ENCODE measurements at regions of chr6 and their contacts with region 1.

Region 1: DNA sequence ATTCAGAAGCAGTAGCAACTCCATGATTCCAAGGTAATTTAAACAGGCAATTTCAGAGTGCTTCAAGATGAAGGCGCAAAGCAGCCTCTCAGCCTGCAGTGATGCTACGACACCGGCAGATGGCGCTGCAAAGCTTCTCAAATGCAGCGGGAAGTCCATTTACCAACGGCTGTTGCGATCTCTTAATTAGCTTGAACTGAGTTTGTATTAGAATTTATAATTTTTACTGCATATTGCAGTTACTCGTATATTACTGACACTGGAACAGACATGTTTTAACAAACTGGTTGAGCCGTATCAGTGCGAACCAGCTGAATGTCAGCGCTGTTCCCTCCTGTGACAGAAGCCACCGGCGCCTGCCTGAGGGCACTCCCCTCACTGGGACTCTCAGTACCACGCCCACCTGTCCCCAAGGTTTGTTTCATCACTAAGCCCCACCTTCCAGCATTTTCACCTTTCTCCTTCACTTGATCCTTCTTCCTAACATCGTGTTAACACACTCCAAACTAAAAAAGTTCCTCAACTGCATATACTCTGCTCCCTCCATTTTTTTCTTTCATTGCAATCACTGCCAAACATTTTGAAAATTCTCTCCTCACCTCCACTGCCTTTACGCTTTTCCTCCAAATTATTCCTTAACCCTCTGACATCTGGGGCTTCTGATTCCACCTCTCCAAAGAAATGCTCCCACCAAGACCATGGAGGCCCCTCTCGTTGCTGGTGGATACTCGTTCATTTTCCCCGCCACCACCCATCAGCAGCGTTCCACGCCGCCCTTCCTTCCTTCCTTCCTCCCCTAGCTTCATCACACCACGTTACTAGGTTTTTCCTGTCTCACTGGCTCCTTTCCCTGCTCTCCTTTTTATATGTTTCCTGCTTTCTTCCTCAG is 14.5 kb downstream of the GNL1 start:
- DNase-seq: peak; percentile 89
- ATAC-seq: peak; percentile 89
- H3K4me3 Mint-ChIP-seq: peak overlapping the region; percentile 76
- H3K27ac Mint-ChIP-seq: peak overlapping the region; percentile 87
- H3K4me1 Mint-ChIP-seq: peaks cover 32% of the 10 kb centered on the region
- H3K27me3 Mint-ChIP-seq: no peaks in the 10 kb centered on the region

Region 2: DNA sequence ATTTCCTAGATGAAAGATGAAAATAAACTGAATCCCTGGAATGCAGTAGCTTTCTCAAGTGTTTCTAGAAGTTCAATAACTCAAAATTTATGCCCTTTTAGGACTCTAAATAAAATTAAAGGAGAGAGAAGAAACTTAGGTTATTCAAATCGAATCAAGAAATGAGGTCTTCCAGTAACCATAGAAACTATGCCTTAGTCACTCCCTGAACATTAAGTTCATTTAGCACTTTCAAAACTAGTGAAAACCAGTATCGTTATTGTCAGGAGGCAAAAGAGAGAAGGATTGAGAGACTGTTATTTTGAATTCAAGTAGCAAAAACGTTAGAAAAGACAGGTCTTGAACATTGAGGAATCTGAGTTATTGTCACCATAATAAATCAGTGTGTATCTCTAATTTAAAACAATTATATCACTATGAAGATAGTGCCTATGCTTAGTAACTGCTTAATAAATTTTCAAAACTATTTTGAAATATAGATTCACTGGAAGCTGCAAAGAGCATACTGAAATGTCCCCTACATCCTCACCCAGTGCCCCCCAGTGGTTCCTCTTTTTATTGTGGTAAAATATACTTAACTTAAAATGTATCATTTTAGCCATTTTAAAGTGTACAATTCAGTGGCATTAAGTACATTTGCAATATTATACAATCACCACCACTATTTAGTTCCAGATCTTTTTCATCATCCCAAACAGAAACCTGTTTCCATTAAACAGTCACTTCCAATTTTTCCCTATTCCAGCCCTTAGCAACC is 192.2 kb before region 1 on chr6:
- CTCF ChIA-PET with region 1: no interaction called
- DNase-seq: no peak
- ATAC-seq: no peak
- H3K4me3 Mint-ChIP-seq: no peak overlapping the region
- H3K27ac Mint-ChIP-seq: no peak overlapping the region
- H3K4me1 Mint-ChIP-seq: peaks cover 29% of the 10 kb centered on the region
- H3K27me3 Mint-ChIP-seq: peaks cover 52% of the 10 kb centered on the region

Region 3: DNA sequence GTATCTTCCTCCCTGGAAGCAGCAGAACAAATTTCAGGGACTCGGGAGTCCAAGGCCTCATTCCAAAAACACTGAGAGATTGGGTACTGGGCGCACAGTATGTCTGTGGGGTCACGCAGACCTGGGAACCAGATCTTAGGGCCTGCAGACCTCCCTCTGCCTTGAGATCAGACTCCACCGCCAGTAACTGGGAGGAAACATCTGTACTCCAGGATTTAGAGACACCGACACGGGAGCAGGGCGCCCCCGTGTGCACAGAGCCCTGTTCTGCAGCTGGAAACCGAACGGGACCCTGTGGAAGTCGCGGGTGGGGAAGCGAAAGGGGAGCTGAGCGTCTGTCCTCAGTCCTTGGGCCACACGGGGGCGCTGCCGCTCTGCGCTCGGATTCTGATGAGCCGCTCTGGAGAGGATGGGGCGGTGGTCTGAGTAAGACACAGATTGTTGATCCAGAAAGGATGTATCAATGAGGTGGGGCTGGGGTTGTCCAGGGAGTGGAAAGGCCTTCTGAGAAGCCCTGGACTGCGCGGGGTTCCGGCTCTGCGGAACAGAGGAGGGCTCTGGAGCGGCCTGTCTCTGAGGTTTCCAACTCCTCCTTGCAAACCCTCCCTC is 88.1 kb before region 1 on chr6:
- CTCF ChIA-PET with region 1: interaction called, 67 read pairs
- DNase-seq: peak; percentile 88
- ATAC-seq: peak; percentile 83
- H3K4me3 Mint-ChIP-seq: no peak overlapping the region
- H3K27ac Mint-ChIP-seq: no peak overlapping the region
- H3K4me1 Mint-ChIP-seq: peaks cover 30% of the 10 kb centered on the region
- H3K27me3 Mint-ChIP-seq: peaks cover 92% of the 10 kb centered on the region

Region 4: DNA sequence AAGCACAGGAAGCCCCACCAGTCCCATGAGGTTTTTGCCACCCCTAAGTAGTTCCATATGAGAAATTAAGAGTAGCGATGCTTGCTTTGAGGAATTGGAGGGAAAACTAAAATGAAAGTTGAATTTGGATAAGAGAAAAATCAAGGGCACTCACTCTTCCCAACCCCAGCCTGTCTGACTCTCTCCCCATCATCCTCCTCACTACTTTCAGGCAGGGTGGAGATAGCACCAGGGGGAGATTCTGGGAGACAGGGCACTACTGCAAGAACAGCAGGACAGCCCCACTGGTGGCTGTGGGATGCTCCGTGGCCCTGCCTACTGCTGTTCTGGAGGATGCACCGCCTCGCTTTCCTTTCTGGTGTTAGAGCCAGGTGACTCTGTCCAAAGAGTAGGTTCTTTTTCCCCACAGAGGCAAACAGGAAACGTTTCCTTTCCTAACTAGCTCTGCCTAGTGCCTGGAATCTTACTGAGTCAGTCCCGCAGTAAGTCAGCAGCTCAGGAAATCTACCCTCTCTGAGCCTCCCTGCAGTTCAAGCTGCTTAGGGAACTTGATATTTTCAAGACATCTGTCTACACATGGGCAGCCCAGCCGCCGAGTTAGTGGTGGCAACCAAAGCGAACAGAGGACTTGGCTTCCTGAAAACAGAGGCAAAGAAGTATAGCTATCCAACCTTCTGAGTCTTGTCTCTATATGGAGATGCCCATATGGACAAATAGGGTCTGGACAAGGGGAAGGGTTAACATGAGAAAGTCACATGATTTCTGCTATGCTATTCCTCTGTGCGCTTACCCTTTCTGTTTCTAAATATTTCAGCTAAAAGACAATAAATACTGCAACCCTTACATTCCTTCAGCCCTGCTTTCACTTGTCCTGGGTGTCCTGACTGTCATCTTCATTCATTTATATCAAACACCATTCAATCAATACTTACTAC is 41.1 kb before region 1 on chr6:
- CTCF ChIA-PET with region 1: interaction called, 25 read pairs
- DNase-seq: no peak
- ATAC-seq: peak; percentile 14
- H3K4me3 Mint-ChIP-seq: peak overlapping the region; percentile 30
- H3K27ac Mint-ChIP-seq: no peak overlapping the region
- H3K4me1 Mint-ChIP-seq: peaks cover 25% of the 10 kb centered on the region
- H3K27me3 Mint-ChIP-seq: no peaks in the 10 kb centered on the region

Region 5: DNA sequence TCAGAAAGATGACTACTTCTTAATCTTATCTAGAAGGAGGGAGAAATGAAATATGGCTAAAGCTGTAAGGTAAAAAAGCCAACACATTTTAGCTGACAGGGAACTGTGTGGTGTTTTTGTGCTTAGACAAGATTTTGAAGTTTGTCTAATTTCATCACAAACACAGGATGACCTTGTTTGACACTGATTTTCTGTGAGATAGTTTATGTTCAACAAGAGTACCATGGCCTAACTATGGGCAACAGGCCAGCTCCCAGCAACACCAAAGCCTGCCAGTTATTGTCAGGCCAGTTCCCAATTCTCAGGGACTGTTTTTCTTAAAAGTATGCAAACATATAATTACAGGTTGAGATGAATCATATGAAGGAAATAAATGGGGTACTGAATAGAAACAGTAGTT is 24.0 kb after region 1 on chr6:
- CTCF ChIA-PET with region 1: interaction called, 43 read pairs
- DNase-seq: no peak
- ATAC-seq: no peak
- H3K4me3 Mint-ChIP-seq: no peak overlapping the region
- H3K27ac Mint-ChIP-seq: peak overlapping the region; percentile 50
- H3K4me1 Mint-ChIP-seq: peaks cover 20% of the 10 kb centered on the region
- H3K27me3 Mint-ChIP-seq: no peaks in the 10 kb centered on the region

Region 6: DNA sequence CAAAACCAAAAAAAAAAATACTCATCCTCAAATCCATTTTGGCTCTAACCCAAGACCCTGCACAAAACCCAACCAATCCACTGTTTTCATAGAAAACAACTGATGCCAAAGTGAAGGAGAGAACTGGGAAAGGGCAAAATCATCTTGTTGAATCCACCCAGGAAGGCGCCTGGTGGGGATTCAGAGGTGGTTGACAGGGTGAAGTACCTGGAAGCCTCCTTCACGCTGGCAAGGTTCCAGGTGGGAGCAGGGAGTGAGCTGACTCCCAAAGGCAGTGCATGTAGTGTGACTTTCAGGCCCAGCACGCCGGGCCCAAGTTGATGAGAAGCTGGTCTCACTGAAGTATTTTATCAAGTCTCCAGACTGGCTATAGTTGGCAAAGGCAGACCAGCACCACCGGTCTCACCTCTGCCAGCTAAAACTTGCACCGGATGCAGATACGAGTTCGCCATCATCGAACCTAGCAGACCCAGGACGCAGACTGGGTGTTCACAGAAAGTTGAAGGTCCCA is 58.7 kb after region 1 on chr6:
- CTCF ChIA-PET with region 1: interaction called, 106 read pairs
- DNase-seq: no peak
- ATAC-seq: no peak
- H3K4me3 Mint-ChIP-seq: no peak overlapping the region
- H3K27ac Mint-ChIP-seq: no peak overlapping the region
- H3K4me1 Mint-ChIP-seq: peaks cover 12% of the 10 kb centered on the region
- H3K27me3 Mint-ChIP-seq: no peaks in the 10 kb centered on the region

Region 7: GRCh38 chr6:30730601-30731435 is 189.1 kb after region 1 on chr6:
- CTCF ChIA-PET with region 1: interaction called, 31 read pairs
- DNase-seq: peak; percentile 91
- ATAC-seq: peak; percentile 94
- H3K4me3 Mint-ChIP-seq: no peak overlapping the region
- H3K27ac Mint-ChIP-seq: peak overlapping the region; percentile 61
- H3K4me1 Mint-ChIP-seq: peaks cover 38% of the 10 kb centered on the region
- H3K27me3 Mint-ChIP-seq: no peaks in the 10 kb centered on the region